GM23248 (cell line): ENCODE measurements at regions of chr16 and their contacts with region 1.

Region 1: DNA sequence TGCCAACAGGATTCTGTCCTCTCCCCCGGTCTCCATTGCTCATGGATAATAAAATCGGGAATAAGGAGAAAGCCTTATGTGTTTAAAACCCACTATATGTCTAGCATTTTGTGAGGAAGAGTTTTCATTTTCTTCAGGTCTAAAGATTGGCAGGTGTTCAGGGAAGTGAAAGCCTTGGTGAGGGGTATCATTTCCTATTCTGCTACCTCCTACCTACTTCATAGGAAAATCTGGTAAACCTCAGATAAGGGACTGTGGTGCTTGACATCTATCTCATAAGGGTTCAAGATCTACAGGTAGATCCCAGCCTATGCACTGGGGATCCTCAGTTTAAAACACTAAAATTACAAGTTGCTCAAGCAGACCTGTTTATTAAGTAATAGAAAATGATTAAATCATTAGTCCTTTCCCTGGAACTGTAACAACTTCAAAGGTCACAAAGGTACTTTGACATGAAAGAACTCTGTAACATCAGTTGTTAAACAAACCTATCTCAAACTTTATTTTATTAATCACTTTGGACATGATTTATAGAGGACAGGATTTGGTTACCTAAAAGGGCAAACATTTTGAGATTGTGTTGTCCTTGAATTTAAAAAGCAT is 6.5 kb downstream of the MOSMO start:
- DNase-seq: no peak
- H3K4me3 ChIP-seq: no peak overlapping the region
- H3K27ac ChIP-seq: no peak overlapping the region
- H3K4me1 ChIP-seq: peaks cover 21% of the 10 kb centered on the region
- H3K27me3 ChIP-seq: no peaks in the 10 kb centered on the region

Region 2: GRCh38 chr16:20424129-20424866 is 1590.1 kb before region 1 on chr16:
- in situ Hi-C with region 1: no loop called
- DNase-seq: no peak
- H3K4me3 ChIP-seq: no peak overlapping the region
- H3K27ac ChIP-seq: no peak overlapping the region
- H3K4me1 ChIP-seq: no peaks in the 10 kb centered on the region
- H3K27me3 ChIP-seq: no peaks in the 10 kb centered on the region

Region 3: DNA sequence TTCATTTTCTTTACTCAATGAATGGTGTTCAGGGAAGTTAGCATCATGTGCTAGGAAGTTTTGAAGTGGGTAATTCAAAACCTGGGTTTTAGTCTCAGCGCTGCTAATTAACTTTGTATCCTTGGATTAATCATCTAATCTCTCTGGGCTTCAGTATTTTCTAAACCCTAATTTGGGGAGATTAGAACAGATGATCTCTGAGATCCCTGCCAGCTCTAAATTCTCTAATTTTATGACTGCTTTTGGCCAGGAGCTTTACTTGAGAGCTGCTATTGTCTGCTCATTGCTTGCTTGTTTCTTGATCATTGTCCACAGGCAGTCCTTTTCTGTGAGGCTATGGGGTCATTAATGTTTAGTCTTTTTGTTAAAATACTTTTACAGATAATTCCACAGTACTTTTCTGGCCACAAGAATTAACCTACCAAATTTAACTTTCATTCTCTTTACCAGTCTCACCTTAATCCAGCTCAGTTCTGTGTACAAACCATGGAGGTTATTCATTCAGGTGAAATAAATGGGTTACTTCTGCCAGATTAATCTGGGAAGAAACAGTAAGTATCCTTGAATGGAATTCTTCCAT is 49.6 kb after region 1 on chr16:
- in situ Hi-C with region 1: loop called (anchors 10 kb)
- DNase-seq: no peak
- H3K4me3 ChIP-seq: no peak overlapping the region
- H3K27ac ChIP-seq: no peak overlapping the region
- H3K4me1 ChIP-seq: no peaks in the 10 kb centered on the region
- H3K27me3 ChIP-seq: no peaks in the 10 kb centered on the region